ENCODE measurements at regions of chr6 and their contacts with region 1.

Region 1: GRCh38 chr6:52162940-52163908 is 23.0 kb upstream of the IL17A start:
- DNase-seq: no peak
- H3K4me3 Mint-ChIP-seq: no peak overlapping the region
- H3K27ac Mint-ChIP-seq: no peak overlapping the region
- H3K4me1 Mint-ChIP-seq: peaks cover 32% of the 10 kb centered on the region
- H3K27me3 Mint-ChIP-seq: peaks cover 42% of the 10 kb centered on the region

Region 2: DNA sequence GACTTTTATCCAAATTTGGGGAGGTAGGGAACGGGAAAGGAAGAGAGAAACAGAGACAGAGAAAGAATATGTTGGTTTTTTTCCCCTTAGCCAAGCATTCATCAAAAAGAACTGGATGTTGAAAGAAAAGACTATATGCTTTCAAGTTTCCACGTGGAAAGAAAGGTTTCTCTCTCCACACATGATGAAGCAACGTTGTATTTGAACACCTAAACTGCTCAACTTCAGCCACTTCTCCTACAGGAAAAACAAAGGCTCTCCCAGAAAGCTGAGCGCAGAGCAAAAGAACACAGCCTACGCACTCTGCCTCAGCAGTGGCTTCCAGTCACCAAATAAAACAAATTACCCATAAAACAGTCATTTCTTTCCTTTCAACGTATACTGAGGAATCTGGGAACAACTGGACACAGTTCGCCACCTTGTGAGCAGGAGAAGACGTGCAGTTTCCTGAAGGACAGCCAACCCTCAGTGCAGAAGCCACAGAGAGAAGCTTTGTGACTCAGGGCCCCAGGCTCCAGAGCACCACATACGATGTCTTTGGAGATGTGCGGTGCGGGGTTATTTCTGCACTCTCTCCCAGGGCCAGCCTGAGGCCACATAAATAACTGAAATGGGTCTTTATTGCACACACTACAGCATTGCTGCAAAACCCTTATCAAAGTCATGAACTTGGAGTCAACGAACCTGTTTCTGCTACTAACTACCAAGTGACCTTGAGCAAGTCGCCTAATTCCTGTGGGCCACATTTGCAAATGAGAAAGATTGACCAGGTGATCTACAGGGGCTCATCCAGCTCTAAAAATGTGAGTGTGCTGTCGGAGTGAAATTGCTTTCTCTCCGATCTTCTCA is 71.0 kb after region 1 on chr6:
- intact Hi-C with region 1: loop called (anchors 1 kb)
- DNase-seq: no peak
- H3K4me3 Mint-ChIP-seq: no peak overlapping the region
- H3K27ac Mint-ChIP-seq: no peak overlapping the region
- H3K4me1 Mint-ChIP-seq: peaks cover 36% of the 10 kb centered on the region
- H3K27me3 Mint-ChIP-seq: peaks cover 73% of the 10 kb centered on the region

Region 3: GRCh38 chr6:52263709-52264540 is 100.7 kb after region 1 on chr6:
- intact Hi-C with region 1: loop called (anchors 1 kb)
- DNase-seq: peak; percentile 63
- H3K4me3 Mint-ChIP-seq: no peak overlapping the region
- H3K27ac Mint-ChIP-seq: peak overlapping the region; percentile 47
- H3K4me1 Mint-ChIP-seq: peaks cover 7% of the 10 kb centered on the region
- H3K27me3 Mint-ChIP-seq: no peaks in the 10 kb centered on the region

Region 4: GRCh38 chr6:52399511-52400312 is 236.5 kb after region 1 on chr6:
- intact Hi-C with region 1: loop called (anchors 1 kb)
- DNase-seq: no peak
- H3K4me3 Mint-ChIP-seq: peak overlapping the region; percentile 42
- H3K27ac Mint-ChIP-seq: peak overlapping the region; percentile 38
- H3K4me1 Mint-ChIP-seq: peaks cover 52% of the 10 kb centered on the region
- H3K27me3 Mint-ChIP-seq: peaks cover 5% of the 10 kb centered on the region